Panc1 (cell line): ENCODE measurements at regions of chr9 and their contacts with region 1.

Region 1: DNA sequence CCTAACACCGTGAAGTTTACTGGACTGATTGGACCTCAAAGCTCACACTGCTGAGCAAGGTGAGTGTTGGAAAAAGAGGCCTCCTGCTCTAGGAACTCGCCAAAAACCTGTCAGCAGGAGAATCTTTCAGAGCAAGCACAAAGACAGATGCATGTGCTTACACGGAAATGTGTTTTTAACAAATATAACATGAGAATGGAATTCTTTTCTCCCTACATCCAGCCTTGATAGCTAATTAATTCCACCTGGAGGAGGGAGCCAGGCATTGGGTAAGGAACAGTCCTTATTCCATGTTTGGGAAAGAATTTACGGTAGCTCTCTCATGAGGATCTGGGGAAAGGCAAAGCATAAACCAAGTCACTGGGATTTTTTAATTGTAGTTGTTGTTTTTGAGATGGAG is 98.8 kb downstream of the KLF4 start:
- DNase-seq: no peak
- ATAC-seq: no peak
- H3K4me3 ChIP-seq: no peak overlapping the region
- H3K27ac ChIP-seq: no peak overlapping the region
- H3K4me1 ChIP-seq: no peaks in the 10 kb centered on the region
- H3K27me3 ChIP-seq: no peaks in the 10 kb centered on the region
- CTCF ChIP-seq: no peak

Region 2: GRCh38 chr9:107323836-107324585 is 66.8 kb before region 1 on chr9:
- CTCF ChIA-PET with region 1: no interaction called
- POLR2A ChIA-PET with region 1: interaction called, 10 read pairs
- in situ Hi-C with region 1: no loop called
- intact Hi-C with region 1: no loop called
- DNase-seq: no peak
- ATAC-seq: no peak
- H3K4me3 ChIP-seq: no peak overlapping the region
- H3K27ac ChIP-seq: no peak overlapping the region
- H3K4me1 ChIP-seq: no peaks in the 10 kb centered on the region
- H3K27me3 ChIP-seq: no peaks in the 10 kb centered on the region
- CTCF ChIP-seq: no peak